ENCODE measurements at regions of chr2 and their contacts with region 1.

Region 1: GRCh38 chr2:201231781-201232466 is 28.4 kb upstream of the CASP8 start:
- DNase-seq: peak; percentile 93
- H3K4me3 ChIP-seq: no peak overlapping the region
- H3K27ac ChIP-seq: peak overlapping the region; percentile 22
- H3K4me1 ChIP-seq: peaks cover 10% of the 10 kb centered on the region
- H3K27me3 ChIP-seq: no peaks in the 10 kb centered on the region
- CTCF ChIP-seq: peak; percentile 89 to 92
- POLR2A ChIP-seq: peak; percentile 51

Region 2: DNA sequence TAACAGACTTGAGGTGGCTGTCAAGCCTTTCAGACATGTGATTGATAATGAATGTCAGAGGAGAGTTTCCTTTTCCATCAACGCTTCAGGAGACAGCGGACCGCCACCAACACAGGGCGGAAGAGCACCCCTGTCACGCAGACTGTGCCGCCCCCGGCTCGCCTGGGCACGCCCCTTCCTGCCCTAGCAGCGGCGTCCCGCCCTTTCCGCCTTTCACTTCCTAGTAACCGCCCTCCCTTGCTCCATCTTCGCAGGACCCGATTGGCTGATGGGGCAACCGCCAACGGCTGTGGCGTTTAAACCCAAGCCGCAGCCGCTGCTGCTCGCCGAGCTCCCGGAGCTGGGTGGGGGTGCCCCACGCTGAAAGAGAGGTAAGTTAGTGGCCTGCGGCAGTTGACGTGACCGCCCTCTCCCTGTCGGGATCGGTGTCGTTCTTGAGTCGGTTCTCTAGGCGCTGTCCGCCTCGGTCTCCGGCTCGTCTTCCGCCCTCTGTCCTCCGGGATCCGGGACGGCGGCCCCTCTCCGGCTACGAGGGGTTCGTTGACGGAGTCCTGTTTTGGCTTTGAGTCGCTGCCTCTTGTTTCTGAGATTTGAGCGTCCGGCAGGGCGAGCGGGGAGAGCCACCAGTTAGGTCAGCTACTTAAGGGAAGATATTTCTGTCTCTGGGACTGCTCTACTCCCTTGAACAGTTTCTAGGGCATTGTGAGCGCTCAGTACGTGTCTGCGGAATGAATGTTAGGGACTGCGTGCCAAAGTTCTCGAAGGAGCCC is 705.9 kb before region 1 on chr2 and contains the start of gene SGO2:
- CTCF ChIA-PET with region 1: no interaction called
- POLR2A ChIA-PET with region 1: no interaction called
- dilution Hi-C with region 1: no loop called
- intact Hi-C with region 1: no loop called
- DNase-seq: peak; percentile 95
- H3K4me3 ChIP-seq: peak within 1 kb of the TSS; percentile 66 to 83 (median 67)
- H3K27ac ChIP-seq: peak within 1 kb of the TSS; percentile 8
- H3K4me1 ChIP-seq: peaks cover 8% of the 10 kb centered on the region
- H3K27me3 ChIP-seq: peaks cover 17 to 19% of the 10 kb centered on the region in 2 experiments
- CTCF ChIP-seq: no peak
- POLR2A ChIP-seq: peak; percentile 90
- total RNA-seq, gene SGO2: 19.7 and 20.5 TPM in 2 replicates

Region 3: DNA sequence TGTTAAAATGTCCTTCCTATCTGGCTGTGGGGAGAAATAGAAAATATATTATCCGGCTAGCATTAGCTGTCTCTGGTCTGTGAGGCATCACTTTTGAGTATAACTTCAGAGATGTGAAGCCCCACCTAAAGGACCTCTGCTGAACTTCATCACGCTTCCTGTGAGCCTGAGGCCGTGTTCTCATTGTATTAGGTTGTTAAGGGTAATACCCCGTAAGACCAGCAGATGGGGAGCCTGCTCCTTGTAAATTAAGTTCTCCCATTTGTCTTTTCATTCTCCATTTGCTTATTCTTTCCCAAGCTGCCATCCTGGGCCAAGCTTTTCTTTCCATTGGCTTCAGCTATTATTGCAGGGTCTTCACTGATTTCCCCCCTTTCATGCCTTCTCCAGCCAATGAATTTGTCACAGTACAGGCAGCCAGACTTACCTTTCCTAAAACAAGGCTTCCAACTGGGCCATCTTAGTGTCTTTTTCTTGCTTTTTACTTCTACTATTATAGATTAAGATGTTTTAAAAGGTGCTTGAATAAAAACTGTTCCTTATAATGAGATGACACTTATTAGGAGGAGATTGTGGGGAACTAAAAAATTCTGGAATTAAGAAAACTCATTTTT is 330.4 kb before region 1 on chr2:
- CTCF ChIA-PET with region 1: interaction called, 46 read pairs
- POLR2A ChIA-PET with region 1: no interaction called
- dilution Hi-C with region 1: no loop called
- intact Hi-C with region 1: loop called (anchors 1 kb)
- DNase-seq: peak; percentile 91
- H3K4me3 ChIP-seq: no peak overlapping the region
- H3K27ac ChIP-seq: no peak overlapping the region
- H3K4me1 ChIP-seq: no peaks in the 10 kb centered on the region
- H3K27me3 ChIP-seq: no peaks in the 10 kb centered on the region
- CTCF ChIP-seq: peak; percentile 74 to 75
- POLR2A ChIP-seq: no peak

Region 4: DNA sequence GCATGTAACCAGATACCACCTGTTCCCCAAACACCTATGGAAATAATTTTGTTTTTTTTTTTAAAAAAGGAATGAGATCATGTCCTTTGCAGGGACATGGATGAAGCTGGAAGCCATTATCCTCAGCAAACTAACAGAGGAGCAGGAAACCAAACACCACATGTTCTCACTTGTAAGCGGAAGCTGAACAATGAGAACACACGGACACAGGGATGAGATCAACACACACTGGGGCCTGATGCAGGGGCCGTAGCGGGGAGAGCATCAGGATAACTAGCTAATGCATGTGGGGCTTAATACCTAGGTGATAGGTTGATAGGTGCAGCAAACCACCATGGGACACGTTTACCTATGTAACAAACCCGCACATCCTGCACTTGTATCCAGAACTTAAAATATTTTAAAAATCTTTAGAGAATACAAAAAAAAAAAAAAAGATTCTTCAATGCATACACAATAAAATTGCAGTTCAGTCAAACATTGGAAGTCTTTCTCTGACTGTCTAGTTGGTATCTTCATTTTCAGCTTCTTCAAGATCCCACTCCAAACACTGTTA is 60.6 kb before region 1 on chr2:
- CTCF ChIA-PET with region 1: interaction called, 11 read pairs
- POLR2A ChIA-PET with region 1: no interaction called
- dilution Hi-C with region 1: no loop called
- intact Hi-C with region 1: no loop called
- DNase-seq: peak; percentile 64
- H3K4me3 ChIP-seq: no peak overlapping the region
- H3K27ac ChIP-seq: no peak overlapping the region
- H3K4me1 ChIP-seq: peaks cover 10% of the 10 kb centered on the region
- H3K27me3 ChIP-seq: no peaks in the 10 kb centered on the region
- CTCF ChIP-seq: no peak
- POLR2A ChIP-seq: peak; percentile 66

Region 5: GRCh38 chr2:201194097-201194496 is 37.8 kb before region 1 on chr2:
- CTCF ChIA-PET with region 1: interaction called, 42 read pairs
- POLR2A ChIA-PET with region 1: interaction called, 3 read pairs
- dilution Hi-C with region 1: no loop called
- intact Hi-C with region 1: no loop called
- DNase-seq: no peak
- H3K4me3 ChIP-seq: no peak overlapping the region
- H3K27ac ChIP-seq: no peak overlapping the region
- H3K4me1 ChIP-seq: peaks cover 35% of the 10 kb centered on the region
- H3K27me3 ChIP-seq: no peaks in the 10 kb centered on the region
- CTCF ChIP-seq: no peak
- POLR2A ChIP-seq: no peak

Region 6: GRCh38 chr2:201242571-201243277 is 10.8 kb after region 1 on chr2:
- CTCF ChIA-PET with region 1: interaction called, 10 read pairs
- POLR2A ChIA-PET with region 1: no interaction called
- dilution Hi-C with region 1: no loop called
- intact Hi-C with region 1: no loop called
- DNase-seq: no peak
- H3K4me3 ChIP-seq: no peak overlapping the region
- H3K27ac ChIP-seq: no peak overlapping the region
- H3K4me1 ChIP-seq: no peaks in the 10 kb centered on the region
- H3K27me3 ChIP-seq: no peaks in the 10 kb centered on the region
- CTCF ChIP-seq: no peak
- POLR2A ChIP-seq: no peak

Region 7: GRCh38 chr2:201363857-201364560 is 132.1 kb after region 1 on chr2:
- CTCF ChIA-PET with region 1: interaction called, 58 read pairs
- POLR2A ChIA-PET with region 1: no interaction called
- dilution Hi-C with region 1: no loop called
- intact Hi-C with region 1: loop called (anchors 1 kb)
- DNase-seq: peak; percentile 54
- H3K4me3 ChIP-seq: no peak overlapping the region
- H3K27ac ChIP-seq: no peak overlapping the region
- H3K4me1 ChIP-seq: no peaks in the 10 kb centered on the region
- H3K27me3 ChIP-seq: no peaks in the 10 kb centered on the region
- CTCF ChIP-seq: peak; percentile 66 to 78
- POLR2A ChIP-seq: no peak

Region 8: GRCh38 chr2:201707753-201708152 is 475.8 kb after region 1 on chr2:
- CTCF ChIA-PET with region 1: interaction called, 4 read pairs
- POLR2A ChIA-PET with region 1: no interaction called
- dilution Hi-C with region 1: no loop called
- intact Hi-C with region 1: loop called (anchors 1 kb)
- DNase-seq: peak; percentile 67
- H3K4me3 ChIP-seq: no peak overlapping the region
- H3K27ac ChIP-seq: peak overlapping the region; percentile 10
- H3K4me1 ChIP-seq: peaks cover 28% of the 10 kb centered on the region
- H3K27me3 ChIP-seq: no peaks in the 10 kb centered on the region
- CTCF ChIP-seq: peak; percentile 17 to 38
- POLR2A ChIP-seq: no peak